Sigmoid colon (tissue), 7 donors: ENCODE measurements at regions of chr2 and their contacts with region 1.

Region 1: DNA sequence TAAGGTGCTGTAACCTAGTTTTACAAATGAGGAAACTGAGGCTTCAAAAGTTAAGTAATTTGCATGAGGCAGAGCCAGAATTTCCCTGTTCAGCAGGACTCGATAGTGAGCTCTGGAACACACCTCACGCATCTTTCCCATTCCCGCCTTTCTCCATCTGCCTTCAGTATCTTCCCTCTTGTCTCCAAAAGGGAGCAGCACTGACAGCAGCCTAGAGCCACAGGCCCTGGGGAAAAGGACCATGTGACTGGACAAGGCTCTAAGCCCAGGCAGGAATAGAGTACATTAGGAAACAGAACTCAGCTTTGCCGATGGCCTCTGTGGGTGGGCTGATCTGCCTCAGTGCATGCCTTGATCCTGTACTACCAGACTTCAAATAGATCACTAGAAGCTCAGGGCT is 21.5 kb downstream of the GPR155 start:
- DNase-seq: no peak
- H3K4me3 ChIP-seq: no peak overlapping the region
- H3K27ac ChIP-seq: no peak overlapping the region
- H3K4me1 ChIP-seq: no peaks in the 10 kb centered on the region
- H3K27me3 ChIP-seq: no peaks in the 10 kb centered on the region
- CTCF ChIP-seq: no peak
- EP300 ChIP-seq: no peak
- POLR2A ChIP-seq: no peak

Region 2: GRCh38 chr2:174138161-174138560 is 327.2 kb before region 1 on chr2:
- intact Hi-C with region 1: no loop called
- DNase-seq: no peak
- H3K4me3 ChIP-seq: no peak overlapping the region
- H3K27ac ChIP-seq: no peak overlapping the region
- H3K4me1 ChIP-seq: no peaks in the 10 kb centered on the region
- H3K27me3 ChIP-seq: no peaks in the 10 kb centered on the region
- CTCF ChIP-seq: no peak
- EP300 ChIP-seq: no peak
- POLR2A ChIP-seq: no peak

Region 3: GRCh38 chr2:174522553-174522952 is 57.2 kb after region 1 on chr2:
- intact Hi-C with region 1: loop called (anchors 5 kb)
- DNase-seq: no peak
- H3K4me3 ChIP-seq: no peak overlapping the region
- H3K27ac ChIP-seq: peak overlapping the region in 1 of 4 donors; percentile 13
- H3K4me1 ChIP-seq: no peaks in the 10 kb centered on the region
- H3K27me3 ChIP-seq: no peaks in the 10 kb centered on the region
- CTCF ChIP-seq: peak in 2 of 4 experiments; percentile 16 to 31
- EP300 ChIP-seq: no peak
- POLR2A ChIP-seq: no peak

Region 4: GRCh38 chr2:174603280-174603679 is 138.0 kb after region 1 on chr2:
- intact Hi-C with region 1: loop called (anchors 2 kb)
- DNase-seq: peak; percentile 77
- H3K4me3 ChIP-seq: no peak overlapping the region
- H3K27ac ChIP-seq: peak overlapping the region in 2 of 4 donors; percentile 8 to 33
- H3K4me1 ChIP-seq: peaks cover 0 to 57% (median 37%) of the 10 kb centered on the region in 4 donors
- H3K27me3 ChIP-seq: no peaks in the 10 kb centered on the region
- CTCF ChIP-seq: peak in 3 of 4 experiments; percentile 12 to 33 (median 21)
- EP300 ChIP-seq: no peak
- POLR2A ChIP-seq: no peak

Region 5: DNA sequence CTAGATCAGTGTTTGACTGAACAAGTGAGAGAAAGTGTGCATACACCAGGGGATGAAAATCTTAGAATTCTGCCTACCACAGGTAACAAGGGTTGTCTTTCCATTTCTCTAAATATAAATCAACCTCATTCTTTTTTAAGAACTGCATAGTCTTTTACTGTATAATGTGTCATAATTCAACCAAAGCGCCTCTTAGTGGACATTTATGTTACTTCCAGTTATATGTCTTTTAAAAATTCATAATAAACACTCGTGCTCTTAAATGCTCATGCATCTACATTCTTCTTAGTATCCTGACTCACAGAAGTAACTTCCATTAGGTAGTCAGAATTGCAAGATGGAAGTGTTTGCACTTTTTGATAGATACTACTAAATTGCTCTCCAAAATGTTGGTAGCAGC is 222.8 kb after region 1 on chr2:
- intact Hi-C with region 1: loop called (anchors 2 kb)
- DNase-seq: no peak
- H3K4me3 ChIP-seq: no peak overlapping the region
- H3K27ac ChIP-seq: no peak overlapping the region
- H3K4me1 ChIP-seq: peaks cover 0 to 8% (median 3%) of the 10 kb centered on the region in 4 donors
- H3K27me3 ChIP-seq: no peaks in the 10 kb centered on the region
- CTCF ChIP-seq: peak in 2 of 4 experiments; percentile 38 to 55
- EP300 ChIP-seq: no peak
- POLR2A ChIP-seq: no peak